HepG2 (cell line): ENCODE measurements at regions of chr2 and their contacts with region 1.

Region 1: DNA sequence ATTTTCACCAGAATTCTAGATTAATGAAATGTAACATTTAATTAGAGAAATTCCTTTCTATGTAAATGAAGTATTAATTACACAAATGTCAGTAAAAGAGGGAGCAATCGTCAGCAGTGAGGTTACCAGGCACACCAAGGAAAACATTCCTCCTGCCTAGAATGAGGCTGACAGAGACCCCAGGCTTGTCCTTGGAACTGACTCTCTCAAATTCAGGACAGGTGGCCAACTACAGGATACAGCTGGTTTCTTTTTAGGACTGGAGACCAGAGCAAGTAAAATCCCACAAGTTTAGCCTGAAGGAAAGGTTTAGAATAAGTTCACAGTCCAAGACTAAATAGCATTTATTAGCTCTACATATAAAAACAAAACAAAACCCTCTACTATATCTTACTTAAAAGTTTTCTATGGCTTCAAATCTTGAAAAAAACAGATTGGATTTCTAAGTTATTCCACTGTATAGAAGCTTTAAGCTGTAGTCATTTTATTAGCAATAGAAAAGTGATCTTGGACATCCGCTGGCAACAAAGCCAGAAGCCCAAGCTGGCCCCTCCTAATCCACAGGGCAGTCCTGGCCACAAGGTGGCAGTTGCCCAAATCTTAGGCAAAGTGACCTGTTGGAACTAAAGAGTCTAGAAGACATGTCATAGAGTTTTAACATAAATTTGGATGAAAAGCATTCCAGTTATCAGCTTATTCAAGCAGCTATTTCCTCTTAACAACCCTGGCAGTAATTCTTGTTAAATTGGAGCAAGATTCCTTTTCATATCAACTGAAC is 81.0 kb downstream of the SP3 start:
- DNase-seq: peak; percentile 56
- ATAC-seq: peak; percentile 93
- H3K4me3 ChIP-seq: no peak overlapping the region
- H3K27ac ChIP-seq: no peak overlapping the region
- H3K4me1 ChIP-seq: no peaks in the 10 kb centered on the region
- H3K27me3 ChIP-seq: peaks cover 0 to 25% of the 10 kb centered on the region in 2 experiments; a peak in 2 of 5 replicates
- CTCF ChIP-seq: peak; percentile 77
- EP300 ChIP-seq: no peak
- POLR2A ChIP-seq: no peak
- RAD21 ChIP-seq: peak; percentile 64

Region 2: GRCh38 chr2:174004905-174005605 is 120.8 kb after region 1 on chr2:
- CTCF ChIA-PET with region 1: interaction called, 25 read pairs
- POLR2A ChIA-PET with region 1: no interaction called
- in situ Hi-C with region 1: loop called (anchors 5 kb)
- intact Hi-C with region 1: loop called (anchors 1 kb)
- DNase-seq: no peak
- ATAC-seq: no peak
- H3K4me3 ChIP-seq: no peak overlapping the region
- H3K27ac ChIP-seq: no peak overlapping the region
- H3K4me1 ChIP-seq: peaks cover 27% of the 10 kb centered on the region
- H3K27me3 ChIP-seq: no peaks in the 10 kb centered on the region
- CTCF ChIP-seq: no peak
- EP300 ChIP-seq: no peak
- POLR2A ChIP-seq: no peak
- RAD21 ChIP-seq: no peak

Region 3: DNA sequence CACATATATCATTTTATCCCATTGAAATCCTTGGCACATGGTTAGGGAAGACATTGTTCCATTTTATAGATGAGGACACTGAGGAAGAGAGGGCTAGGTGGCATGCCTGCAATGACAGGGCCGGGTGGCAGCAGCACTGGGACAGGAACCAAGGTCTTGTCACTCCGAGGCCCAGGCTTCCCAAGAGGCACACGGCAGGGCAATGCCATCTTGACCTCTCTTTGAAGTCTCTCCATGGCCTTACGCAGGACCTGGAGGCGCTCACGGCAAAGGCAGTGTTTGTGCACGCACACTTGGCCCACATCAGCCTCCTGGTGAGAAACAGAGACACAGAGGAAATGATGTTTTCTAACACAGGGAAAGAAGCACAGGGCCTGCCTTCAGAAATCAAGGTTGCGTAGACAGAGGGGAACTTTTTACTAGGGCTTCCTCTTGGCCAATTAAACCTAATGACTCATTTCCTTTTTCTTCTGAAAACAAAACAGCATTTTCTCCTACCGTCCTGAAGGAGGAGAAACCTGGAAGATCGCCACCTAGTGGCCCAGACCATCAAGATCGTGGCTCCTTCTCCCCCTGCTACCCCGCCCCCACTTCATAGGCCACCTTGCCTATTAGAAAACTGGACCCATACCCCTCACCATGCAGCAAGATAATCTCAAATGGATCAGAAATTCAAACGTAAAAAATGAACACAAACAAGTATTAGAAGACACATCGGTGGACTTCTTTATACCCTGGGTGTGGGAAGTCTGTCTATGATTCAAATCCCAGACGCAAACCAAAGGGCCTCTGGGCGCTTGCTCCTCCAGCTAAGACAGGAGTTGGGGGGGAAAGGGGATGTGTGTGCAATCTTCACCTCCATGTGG is 155.6 kb after region 1 on chr2:
- CTCF ChIA-PET with region 1: interaction called, 4 read pairs
- POLR2A ChIA-PET with region 1: no interaction called
- in situ Hi-C with region 1: no loop called
- intact Hi-C with region 1: loop called (anchors 1 kb)
- DNase-seq: peak; percentile 88
- ATAC-seq: peak; percentile 90
- H3K4me3 ChIP-seq: peak overlapping the region; percentile 48 to 73 (median 54)
- H3K27ac ChIP-seq: peak overlapping the region; percentile 1
- H3K4me1 ChIP-seq: peaks cover 23% of the 10 kb centered on the region
- H3K27me3 ChIP-seq: peaks cover 0 to 4% of the 10 kb centered on the region in 2 experiments; a peak in 2 of 5 replicates
- CTCF ChIP-seq: peak; percentile 91
- EP300 ChIP-seq: no peak
- POLR2A ChIP-seq: no peak
- RAD21 ChIP-seq: peak; percentile 66